HCT116 (cell line): ENCODE measurements at regions of chr6 and their contacts with region 1.

Region 1: DNA sequence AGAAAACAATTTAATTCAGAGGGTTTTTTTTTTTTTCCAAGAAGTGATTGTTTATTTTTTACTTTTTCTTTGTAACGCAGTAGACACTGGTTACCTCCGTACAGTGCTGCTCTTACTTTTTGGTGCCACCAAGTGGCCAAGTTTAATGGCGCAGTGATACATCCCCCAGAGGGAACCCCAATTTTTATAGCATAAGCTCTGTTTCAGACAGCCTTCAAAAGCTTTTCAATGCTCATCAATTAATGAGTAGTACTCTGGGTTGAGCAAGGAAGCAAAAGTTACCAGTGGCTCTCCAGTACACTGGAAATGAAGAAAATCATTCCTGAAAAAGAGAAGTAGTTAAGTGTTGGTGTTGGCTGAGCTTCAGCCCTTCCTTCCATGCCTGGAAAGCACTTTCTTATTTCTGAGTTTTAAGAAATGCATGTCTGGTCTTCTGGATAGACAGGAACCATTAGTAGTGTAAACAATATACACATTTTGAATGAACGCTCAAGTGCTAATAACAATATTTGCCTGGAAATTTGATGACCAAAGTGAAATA is 129.1 kb upstream of the SMLR1 start:
- DNase-seq: peak; percentile 49
- ATAC-seq: peak; percentile 99
- H3K4me3 ChIP-seq: peak overlapping the region in 1 of 2 experiments; percentile 12; a peak in 2 of 4 replicates
- H3K27ac ChIP-seq: no peak overlapping the region
- H3K4me1 ChIP-seq: peaks cover 0 to 8% of the 10 kb centered on the region in 2 experiments; a peak in 1 of 4 replicates
- H3K27me3 ChIP-seq: no peaks in the 10 kb centered on the region
- CTCF ChIP-seq: peak; percentile 84 to 90 (median 88)
- POLR2A ChIP-seq: no peak
- RAD21 ChIP-seq: peak; percentile 92

Region 2: DNA sequence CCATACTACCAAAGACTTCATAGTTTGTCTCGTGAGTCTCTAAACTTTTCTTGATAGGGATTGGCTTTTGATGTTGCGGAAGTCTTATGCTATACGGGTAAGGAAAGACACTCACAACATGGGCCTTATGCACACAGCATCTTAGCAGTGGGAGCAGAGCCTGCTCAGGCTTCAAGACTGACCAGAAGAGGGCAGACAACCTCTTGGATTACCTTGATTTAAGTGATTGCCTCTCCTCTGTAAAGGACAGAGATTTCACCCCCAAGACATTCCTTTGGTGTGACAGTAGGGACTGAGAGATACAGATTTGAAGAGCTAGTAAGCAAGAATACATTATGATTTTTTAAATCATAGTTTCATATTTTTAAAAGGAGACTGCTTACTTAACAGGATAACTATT is 404.3 kb before region 1 on chr6:
- CTCF ChIA-PET with region 1: interaction called, 21 read pairs
- POLR2A ChIA-PET with region 1: no interaction called
- RAD21 ChIA-PET with region 1: interaction called in 1 of 2 experiments, 5 read pairs
- intact Hi-C with region 1: loop called (anchors 1 kb)
- DNase-seq: peak; percentile 45
- ATAC-seq: peak; percentile 99
- H3K4me3 ChIP-seq: no peak overlapping the region
- H3K27ac ChIP-seq: no peak overlapping the region
- H3K4me1 ChIP-seq: no peaks in the 10 kb centered on the region
- H3K27me3 ChIP-seq: no peaks in the 10 kb centered on the region
- CTCF ChIP-seq: peak; percentile 58 to 72 (median 67); a peak in 5 of 6 replicates
- POLR2A ChIP-seq: no peak
- RAD21 ChIP-seq: peak; percentile 74

Region 3: DNA sequence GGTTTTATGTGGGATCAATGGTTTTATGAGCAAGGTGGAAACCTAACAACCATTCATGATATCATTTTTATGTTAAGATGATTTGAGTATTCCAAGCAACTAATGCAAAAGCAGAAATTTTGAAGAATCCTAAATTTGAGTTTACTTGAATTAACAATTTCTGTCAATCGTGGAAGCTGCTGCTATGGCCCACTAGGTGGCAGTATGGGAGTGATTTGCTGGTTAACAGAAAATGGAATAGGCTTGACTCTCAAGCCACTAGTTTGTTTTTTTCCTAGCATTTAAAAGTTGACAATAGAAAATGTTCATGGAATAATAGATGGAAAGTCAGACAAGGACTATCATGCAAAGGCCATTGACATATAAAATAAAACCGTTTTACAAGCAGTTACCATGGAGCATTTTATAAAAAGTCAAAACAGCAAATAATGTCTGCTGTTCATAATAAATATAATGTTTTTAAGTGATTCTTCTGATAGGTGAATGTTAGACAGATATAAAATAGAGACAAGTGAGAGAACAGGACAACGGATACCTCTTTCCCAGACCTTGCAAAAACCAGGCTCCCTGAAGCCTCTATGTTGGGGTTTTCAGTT is 375.3 kb before region 1 on chr6:
- CTCF ChIA-PET with region 1: interaction called, 31 read pairs
- POLR2A ChIA-PET with region 1: no interaction called
- RAD21 ChIA-PET with region 1: interaction called in 1 of 2 experiments, 5 read pairs
- intact Hi-C with region 1: loop called (anchors 1 kb)
- DNase-seq: peak; percentile 48
- ATAC-seq: peak; percentile 77
- H3K4me3 ChIP-seq: no peak overlapping the region
- H3K27ac ChIP-seq: no peak overlapping the region; the same call in 1 of the 2 replicates
- H3K4me1 ChIP-seq: no peaks in the 10 kb centered on the region; a peak in 1 of 4 replicates
- H3K27me3 ChIP-seq: no peaks in the 10 kb centered on the region
- CTCF ChIP-seq: peak; percentile 83 to 95 (median 90)
- POLR2A ChIP-seq: no peak
- RAD21 ChIP-seq: peak; percentile 95

Region 4: GRCh38 chr6:130365166-130366106 is 332.6 kb before region 1 on chr6 and contains the start of gene TMEM200A:
- CTCF ChIA-PET with region 1: interaction called, 13 read pairs
- POLR2A ChIA-PET with region 1: interaction called, 3 read pairs
- RAD21 ChIA-PET with region 1: no interaction called
- intact Hi-C with region 1: loop called (anchors 1 kb)
- DNase-seq: peak; percentile 39
- ATAC-seq: peak; percentile 82
- H3K4me3 ChIP-seq: peak within 1 kb of the TSS; percentile 61 to 74
- H3K27ac ChIP-seq: peak within 1 kb of the TSS; percentile 57
- H3K4me1 ChIP-seq: peaks cover 0 to 23% of the 10 kb centered on the region in 2 experiments; a peak in 1 of 4 replicates
- H3K27me3 ChIP-seq: no peaks in the 10 kb centered on the region
- CTCF ChIP-seq: peak; percentile 70 to 85 (median 76)
- POLR2A ChIP-seq: no peak
- RAD21 ChIP-seq: peak; percentile 64
- total RNA-seq, gene TMEM200A: 22.9 TPM